ENCODE measurements at regions of chr15 and their contacts with region 1.

Region 1: DNA sequence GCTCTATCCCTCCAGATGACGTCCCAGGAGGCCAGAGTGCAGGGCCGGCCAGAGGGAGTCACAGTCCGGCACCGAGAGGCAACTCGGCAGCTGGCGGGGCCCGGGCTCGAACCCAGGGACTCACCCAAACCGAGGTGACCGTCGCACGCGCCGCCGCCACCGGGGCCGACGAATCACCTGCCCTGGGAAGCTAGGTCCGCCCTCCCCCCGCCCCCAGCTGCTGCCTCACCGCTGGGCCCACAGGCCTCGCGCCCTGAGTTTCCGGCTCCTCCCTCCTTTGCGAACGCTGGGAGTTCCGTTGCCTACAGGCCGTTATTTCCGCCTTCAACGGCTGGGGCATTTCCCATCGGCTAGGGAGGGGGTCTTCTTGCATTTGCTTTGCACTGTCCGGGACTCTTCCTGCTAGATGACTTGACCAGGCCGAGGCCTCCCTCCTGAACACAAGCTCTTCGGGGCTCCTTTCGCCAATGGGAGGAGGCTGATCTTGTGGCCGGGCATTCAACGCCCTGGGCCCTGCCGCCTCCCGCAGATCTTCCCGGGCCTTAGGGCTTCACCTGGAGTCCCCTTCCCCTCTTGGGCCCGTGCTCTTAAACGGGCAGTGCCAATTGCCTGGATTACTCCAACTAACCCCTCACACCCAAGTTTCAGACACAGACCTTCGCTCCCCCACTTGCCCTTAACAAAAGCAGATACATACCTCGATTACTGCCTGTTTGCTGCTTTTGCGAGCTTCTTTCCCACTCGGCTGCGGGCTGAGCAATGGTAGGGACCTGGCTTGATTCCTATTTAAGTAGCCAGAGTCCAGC is at the start of gene SNUPN:
- DNase-seq: peak; percentile 97
- ATAC-seq: peak; percentile 88
- H3K4me3 Mint-ChIP-seq: peak within 1 kb of the TSS; percentile 93
- H3K27ac Mint-ChIP-seq: peak within 1 kb of the TSS; percentile 99
- H3K4me1 Mint-ChIP-seq: peaks cover 45% of the 10 kb centered on the region
- H3K27me3 Mint-ChIP-seq: no peaks in the 10 kb centered on the region
- total RNA-seq, gene SNUPN: 37.4 to 40.3 TPM

Region 2: GRCh38 chr15:74407055-74407691 is 1218.6 kb before region 1 on chr15:
- CTCF ChIA-PET with region 1: no interaction called
- POLR2A ChIA-PET with region 1: no interaction called
- intact Hi-C with region 1: loop called in 1 of 2 experiments (anchors 10 kb)
- DNase-seq: no peak
- ATAC-seq: no peak
- H3K4me3 Mint-ChIP-seq: no peak overlapping the region
- H3K27ac Mint-ChIP-seq: no peak overlapping the region
- H3K4me1 Mint-ChIP-seq: peaks cover 29% of the 10 kb centered on the region
- H3K27me3 Mint-ChIP-seq: no peaks in the 10 kb centered on the region

Region 3: DNA sequence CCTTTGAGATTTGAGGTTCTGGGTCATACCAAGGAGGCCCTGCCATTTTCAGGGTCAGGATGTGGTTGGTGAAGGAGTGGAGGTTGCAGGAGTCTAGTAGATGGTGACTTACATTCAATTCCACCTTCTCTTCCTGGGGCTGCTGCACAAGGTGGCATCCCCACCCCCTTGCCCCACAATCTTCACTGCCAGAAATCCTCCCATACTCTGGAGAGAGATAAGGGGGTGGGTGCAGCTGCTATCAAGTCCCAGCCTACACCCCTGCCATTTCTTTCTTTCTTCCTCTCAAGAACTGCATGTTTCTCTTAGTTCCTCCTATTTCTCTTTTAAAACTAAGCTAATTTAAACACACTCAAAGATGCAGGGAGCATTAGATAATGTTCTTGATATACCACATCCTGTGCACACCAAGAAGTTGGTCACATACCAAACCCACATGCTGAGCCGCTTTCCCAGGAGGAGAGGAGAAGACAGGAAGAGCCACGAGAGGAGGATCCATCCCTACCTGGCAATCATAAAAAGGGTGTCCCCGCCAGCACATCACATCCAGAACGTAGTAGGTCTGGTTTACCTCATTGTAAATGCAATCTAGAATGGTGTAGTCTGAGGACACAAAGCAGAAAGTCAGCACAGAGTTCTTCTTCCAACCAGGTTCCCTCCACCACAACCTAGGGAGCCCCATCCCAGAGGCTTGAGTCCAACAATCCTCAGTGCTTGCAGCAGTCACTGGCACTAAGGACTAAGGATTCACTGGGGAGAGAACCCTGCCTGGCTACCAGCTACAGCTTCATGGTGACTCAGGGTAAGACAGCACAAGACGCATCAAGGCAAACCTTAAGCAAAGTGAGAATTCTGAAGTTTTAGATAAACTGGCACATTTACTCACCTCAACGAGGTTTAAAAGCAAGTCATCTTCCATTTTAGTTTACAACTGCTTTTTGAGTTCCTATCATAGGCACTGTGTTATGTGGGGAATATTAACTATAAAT is 18.7 kb before region 1 on chr15:
- CTCF ChIA-PET with region 1: interaction called, 16 read pairs
- POLR2A ChIA-PET with region 1: interaction called, 6 read pairs
- intact Hi-C with region 1: no loop called
- DNase-seq: peak; percentile 40
- ATAC-seq: peak; percentile 80
- H3K4me3 Mint-ChIP-seq: peak overlapping the region; percentile 22
- H3K27ac Mint-ChIP-seq: peak overlapping the region; percentile 88
- H3K4me1 Mint-ChIP-seq: peaks cover 40% of the 10 kb centered on the region
- H3K27me3 Mint-ChIP-seq: no peaks in the 10 kb centered on the region

Region 4: DNA sequence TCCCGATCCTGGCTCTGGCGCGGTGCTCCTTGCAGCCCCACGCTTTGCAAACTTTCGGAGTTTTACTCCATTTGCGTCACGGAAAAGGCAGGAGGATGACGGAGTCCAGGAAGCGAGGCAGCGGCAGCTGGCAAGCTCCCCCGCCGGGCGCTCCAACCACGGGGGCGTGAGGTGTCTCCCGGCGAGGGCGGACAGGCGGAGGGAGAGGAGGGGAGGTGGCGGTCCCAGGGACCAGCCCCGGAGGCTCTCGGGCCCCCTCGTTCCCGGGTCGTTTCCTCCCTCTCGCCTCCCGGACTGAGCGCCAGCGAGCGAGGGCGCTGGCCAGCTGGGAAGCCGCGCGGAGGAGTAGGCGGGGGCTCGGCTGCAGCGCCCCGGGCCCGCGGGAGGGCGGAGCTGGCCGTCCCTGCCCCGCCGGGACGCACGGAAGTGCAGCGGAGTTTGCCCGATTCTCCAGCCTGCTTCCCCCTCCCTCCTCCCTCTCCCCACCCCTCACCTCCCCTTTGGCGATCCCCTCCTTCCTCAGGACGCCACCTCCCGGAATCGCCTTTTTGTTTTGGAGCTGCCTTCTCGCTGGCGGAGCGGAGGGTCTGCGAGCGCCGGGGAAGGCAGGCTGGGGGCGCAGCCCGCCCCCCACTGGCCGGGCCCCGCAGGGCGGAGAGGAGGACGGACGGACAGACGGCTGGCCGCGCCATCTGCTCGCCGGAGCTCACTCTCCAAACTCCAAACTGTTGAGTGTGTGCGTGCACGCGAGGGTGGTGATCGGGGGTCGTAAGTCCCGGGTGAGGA is 21.8 kb after region 1 on chr15 and contains the start of gene SNX33:
- CTCF ChIA-PET with region 1: interaction called, 10 read pairs
- POLR2A ChIA-PET with region 1: interaction called, 7 read pairs
- intact Hi-C with region 1: no loop called
- DNase-seq: peak; percentile 78
- ATAC-seq: peak; percentile 65
- H3K4me3 Mint-ChIP-seq: peak within 1 kb of the TSS; percentile 76
- H3K27ac Mint-ChIP-seq: peak within 1 kb of the TSS; percentile 58
- H3K4me1 Mint-ChIP-seq: peaks cover 20% of the 10 kb centered on the region
- H3K27me3 Mint-ChIP-seq: no peaks in the 10 kb centered on the region
- total RNA-seq, gene SNX33: 2.2 to 2.4 TPM

Region 5: DNA sequence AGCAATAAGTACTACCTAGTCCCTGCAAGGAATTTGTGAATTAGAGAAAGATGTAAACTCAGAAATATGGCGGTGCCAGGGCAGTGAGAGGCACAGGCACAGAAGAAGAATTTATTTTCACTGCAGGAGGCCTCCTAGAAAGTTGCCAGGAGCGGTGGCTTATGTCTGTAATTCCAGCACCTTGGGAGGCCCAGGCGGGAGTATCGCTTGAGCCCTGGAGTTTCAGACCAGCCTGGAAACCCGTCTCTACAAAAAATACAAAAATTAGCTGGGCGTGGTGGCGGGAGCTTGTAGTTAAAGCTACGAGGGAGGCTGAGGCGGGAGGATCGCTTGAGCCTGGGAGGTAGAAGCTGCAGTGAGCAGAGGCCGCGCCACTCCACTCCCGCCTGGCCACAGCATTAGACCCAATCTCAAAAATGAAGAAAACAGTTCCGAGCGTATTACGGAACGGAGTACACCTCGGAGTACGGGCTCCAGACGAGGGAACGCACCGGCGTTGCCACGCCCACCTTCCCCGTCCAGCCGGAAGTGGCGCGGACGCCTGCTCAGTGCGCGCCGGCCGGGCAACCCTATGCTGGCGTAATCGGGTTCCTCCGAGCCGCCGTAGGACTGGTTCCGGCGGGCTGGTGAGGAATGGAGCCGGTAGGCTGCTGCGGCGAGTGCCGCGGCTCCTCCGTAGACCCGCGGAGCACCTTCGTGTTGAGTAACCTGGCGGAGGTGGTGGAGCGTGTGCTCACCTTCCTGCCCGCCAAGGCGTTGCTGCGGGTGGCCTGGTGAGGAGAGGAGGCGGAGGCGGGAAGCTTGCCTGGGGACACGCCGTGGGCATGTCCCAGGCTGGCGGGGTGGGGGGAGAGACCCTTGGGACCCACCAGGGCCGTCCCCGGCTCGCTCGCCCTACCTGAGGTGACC is 277.8 kb after region 1 on chr15 and contains the start of gene FBXO22:
- CTCF ChIA-PET with region 1: no interaction called
- POLR2A ChIA-PET with region 1: interaction called, 3 read pairs
- intact Hi-C with region 1: loop called in 1 of 2 experiments (anchors 5 kb)
- DNase-seq: peak; percentile 97
- ATAC-seq: peak; percentile 97
- H3K4me3 Mint-ChIP-seq: peak within 1 kb of the TSS; percentile 97
- H3K27ac Mint-ChIP-seq: peak within 1 kb of the TSS; percentile 98
- H3K4me1 Mint-ChIP-seq: peaks cover 40% of the 10 kb centered on the region
- H3K27me3 Mint-ChIP-seq: no peaks in the 10 kb centered on the region
- total RNA-seq, gene FBXO22: 51.4 to 59.2 TPM

Region 6: DNA sequence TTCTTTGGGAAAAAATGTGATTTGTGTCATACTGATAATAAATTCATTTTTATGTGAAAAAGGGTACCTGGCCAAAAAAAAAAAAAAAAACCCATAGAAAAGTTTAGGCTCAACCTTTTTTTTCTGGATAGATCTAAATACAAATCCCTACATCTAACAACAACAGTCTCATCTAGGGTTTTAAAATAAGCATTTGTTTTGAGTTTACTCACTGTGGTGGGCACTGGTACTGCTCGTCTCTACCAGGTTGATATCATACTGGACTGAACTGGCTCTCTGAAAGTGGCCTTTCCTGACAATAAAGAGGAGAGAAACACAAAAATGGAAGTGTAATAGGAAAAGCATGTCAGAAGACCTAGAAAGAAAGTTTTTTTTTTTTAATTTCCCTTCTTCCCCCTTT is 330.0 kb after region 1 on chr15:
- CTCF ChIA-PET with region 1: no interaction called
- POLR2A ChIA-PET with region 1: no interaction called
- intact Hi-C with region 1: no loop called
- DNase-seq: no peak
- ATAC-seq: no peak
- H3K4me3 Mint-ChIP-seq: no peak overlapping the region
- H3K27ac Mint-ChIP-seq: no peak overlapping the region
- H3K4me1 Mint-ChIP-seq: no peaks in the 10 kb centered on the region
- H3K27me3 Mint-ChIP-seq: peaks cover 28% of the 10 kb centered on the region